Activated T-helper 1 cell treated with anti-CD3 and anti-CD28 coated beads, Interleukin-12 subunit alpha, Interleukin-12 subunit beta, Interleukin-2, Interleukin-4 antibody, amounts not matched to agents 30 ng/mL and 10 ng/mL and 1 ng/mL, durations not matched to agents 14 hours and 24 hours and 36 hours (primary cell): ENCODE measurements at regions of chr13 and their contacts with region 1.

Region 1: DNA sequence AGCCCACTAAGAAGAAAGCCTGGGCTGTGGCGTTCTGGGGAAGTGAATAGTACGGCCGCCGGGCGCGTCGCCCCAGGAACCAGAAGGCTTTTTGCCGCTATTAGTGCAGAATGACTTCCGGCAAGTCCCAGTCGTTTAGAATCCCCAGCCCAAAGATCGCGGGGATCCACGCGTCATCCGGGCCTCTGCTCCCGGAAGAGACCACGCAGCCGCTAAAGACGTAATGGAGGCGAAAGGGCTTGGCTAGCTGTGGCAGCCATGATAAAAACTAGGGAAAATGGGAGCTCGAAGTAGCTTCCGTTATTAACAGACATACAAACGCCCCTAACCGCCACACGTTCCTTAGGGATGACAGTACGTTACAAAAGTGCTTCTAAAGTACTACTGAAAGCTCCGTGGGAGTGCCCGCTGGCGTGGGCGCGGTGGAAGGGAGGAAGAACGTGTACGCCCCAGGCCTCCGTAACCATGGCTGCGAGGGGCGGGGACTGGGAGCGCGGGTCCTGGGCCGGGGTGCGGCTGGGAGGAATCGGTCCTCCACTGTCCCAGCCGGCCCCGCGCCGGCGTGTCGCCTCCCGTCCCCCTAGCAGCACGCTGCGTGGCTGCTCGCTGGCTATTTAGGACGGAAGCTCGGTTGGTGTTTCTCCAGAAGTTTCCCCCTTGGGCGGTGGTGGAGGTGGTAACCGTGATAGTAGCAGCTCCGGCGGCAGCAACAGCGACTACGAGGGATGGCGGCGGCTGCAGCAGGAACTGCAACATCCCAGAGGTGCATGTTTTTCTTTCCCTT is at the start of gene SUGT1:
- DNase-seq: peak; percentile 93
- H3K4me3 Mint-ChIP-seq: no peak within 1 kb of the TSS
- H3K27ac Mint-ChIP-seq: no peak within 1 kb of the TSS
- H3K4me1 Mint-ChIP-seq: peaks cover 15% of the 10 kb centered on the region
- H3K27me3 Mint-ChIP-seq: no peaks in the 10 kb centered on the region
- total RNA-seq, gene SUGT1: 63.3 and 66.1 TPM in 2 replicates

Region 2: GRCh38 chr13:52617070-52618060 is 35.0 kb before region 1 on chr13:
- intact Hi-C with region 1: loop called (anchors 1 kb)
- DNase-seq: peak; percentile 80
- H3K4me3 Mint-ChIP-seq: peak overlapping the region; percentile 99
- H3K27ac Mint-ChIP-seq: peak overlapping the region; percentile 95
- H3K4me1 Mint-ChIP-seq: peaks cover 13% of the 10 kb centered on the region
- H3K27me3 Mint-ChIP-seq: no peaks in the 10 kb centered on the region

Region 3: DNA sequence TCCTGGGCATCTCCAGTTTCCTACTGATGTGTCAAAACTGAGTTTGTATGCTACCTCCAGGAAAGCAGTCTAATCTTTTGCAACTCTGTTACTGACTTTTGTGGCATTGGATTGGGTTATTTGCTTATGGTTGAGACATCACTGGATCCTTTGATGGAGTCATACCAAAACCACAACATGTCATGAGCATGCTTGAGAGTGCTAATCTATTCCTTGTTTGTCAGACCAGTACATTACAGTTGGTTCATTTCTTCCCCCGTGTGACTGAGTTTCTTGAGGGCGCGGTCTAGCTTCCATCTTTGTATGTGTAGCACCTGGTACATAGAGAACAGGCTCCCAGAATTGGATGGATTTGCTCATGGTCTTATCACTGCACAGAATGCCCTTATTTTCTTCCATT is 43.5 kb after region 1 on chr13:
- intact Hi-C with region 1: loop called (anchors 1 kb)
- DNase-seq: peak; percentile 4
- H3K4me3 Mint-ChIP-seq: no peak overlapping the region
- H3K27ac Mint-ChIP-seq: peak overlapping the region; percentile 55
- H3K4me1 Mint-ChIP-seq: peaks cover 18% of the 10 kb centered on the region
- H3K27me3 Mint-ChIP-seq: no peaks in the 10 kb centered on the region

Region 4: DNA sequence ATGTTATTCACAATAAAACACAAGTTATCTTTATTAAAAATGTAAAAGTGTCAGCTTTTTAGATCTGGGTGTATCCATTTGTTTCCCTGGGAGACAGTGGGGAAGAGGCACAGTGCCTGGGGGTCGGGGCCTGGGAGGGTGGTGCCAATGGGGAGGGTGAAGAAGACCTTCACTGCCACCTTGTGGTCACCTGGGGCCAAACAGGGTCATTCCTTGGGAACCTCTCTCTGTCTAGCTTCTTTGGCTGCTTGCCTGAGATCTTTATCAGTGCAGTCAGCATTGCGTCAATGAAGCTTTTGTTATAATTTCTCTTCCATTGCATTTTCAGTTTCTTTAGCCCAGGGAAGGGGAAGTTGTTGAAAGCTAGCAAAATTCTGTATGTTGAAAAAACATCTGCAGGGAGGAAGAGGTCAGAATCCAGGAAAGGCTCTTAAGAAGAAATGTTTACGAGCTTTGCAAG is 157.0 kb after region 1 on chr13:
- intact Hi-C with region 1: loop called (anchors 5 kb)
- DNase-seq: peak; percentile 15
- H3K4me3 Mint-ChIP-seq: no peak overlapping the region
- H3K27ac Mint-ChIP-seq: no peak overlapping the region
- H3K4me1 Mint-ChIP-seq: peaks cover 7% of the 10 kb centered on the region
- H3K27me3 Mint-ChIP-seq: peaks cover 7% of the 10 kb centered on the region

Region 5: DNA sequence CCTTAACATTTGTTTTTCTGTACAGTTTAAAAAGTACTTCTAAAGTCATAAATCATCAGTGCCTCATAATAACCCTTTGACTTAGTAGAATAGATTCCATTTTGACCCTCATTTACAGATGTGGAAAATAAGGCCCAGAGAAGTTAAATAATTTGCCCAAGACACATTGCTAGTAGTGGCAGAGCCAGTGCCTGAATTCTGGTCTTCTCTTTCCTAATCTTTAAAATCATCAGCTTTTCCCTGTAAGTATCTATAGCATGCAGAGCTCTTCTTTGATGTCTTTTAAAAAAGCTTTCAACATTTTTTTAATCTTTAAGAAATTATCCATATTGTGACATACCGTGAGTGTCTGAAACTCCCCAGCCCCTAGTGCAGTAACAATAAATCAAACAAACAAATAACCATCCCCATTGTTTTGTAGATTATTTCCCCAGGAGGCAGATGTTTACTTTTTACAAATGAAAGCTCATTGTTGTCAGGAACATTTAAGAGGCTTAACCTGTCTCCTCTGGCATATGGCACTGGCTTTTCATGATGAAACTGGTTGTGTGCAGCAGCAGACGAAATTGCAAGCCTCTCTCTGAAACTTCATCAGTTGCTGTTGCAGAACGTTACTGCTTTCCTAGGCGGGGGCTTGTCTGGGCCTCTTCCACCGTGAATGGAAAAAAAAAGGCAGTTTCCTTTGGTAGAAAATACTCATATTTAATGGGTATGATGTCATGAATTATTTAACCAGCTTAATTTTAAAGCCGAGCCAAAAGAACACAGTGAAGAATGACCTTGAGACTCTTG is 227.8 kb after region 1 on chr13:
- intact Hi-C with region 1: no loop called
- DNase-seq: no peak
- H3K4me3 Mint-ChIP-seq: no peak overlapping the region
- H3K27ac Mint-ChIP-seq: no peak overlapping the region
- H3K4me1 Mint-ChIP-seq: no peaks in the 10 kb centered on the region
- H3K27me3 Mint-ChIP-seq: peaks cover 4% of the 10 kb centered on the region

Region 6: DNA sequence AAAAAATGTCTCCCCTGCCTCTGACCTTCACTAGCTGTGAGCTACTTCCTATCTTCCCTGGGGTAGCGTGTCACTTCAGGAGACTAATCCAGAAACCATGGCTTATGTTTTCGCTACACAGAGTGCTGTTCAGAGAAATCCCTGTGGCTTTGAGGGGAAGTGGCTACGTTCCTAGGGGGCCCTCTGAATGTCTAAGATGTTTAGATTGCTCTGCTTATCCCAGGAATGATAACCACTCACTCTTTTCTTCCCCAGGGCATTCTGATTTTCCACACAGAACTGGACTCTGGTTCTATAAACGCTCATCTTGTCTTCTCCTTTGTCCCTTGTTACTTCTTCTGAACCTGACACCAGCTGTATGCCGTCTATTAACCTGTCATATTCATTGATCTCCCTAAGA is 948.7 kb after region 1 on chr13:
- intact Hi-C with region 1: no loop called
- DNase-seq: no peak
- H3K4me3 Mint-ChIP-seq: no peak overlapping the region
- H3K27ac Mint-ChIP-seq: no peak overlapping the region
- H3K4me1 Mint-ChIP-seq: no peaks in the 10 kb centered on the region
- H3K27me3 Mint-ChIP-seq: no peaks in the 10 kb centered on the region